ENCODE measurements at regions of chr5 and their contacts with region 1.

Region 1: DNA sequence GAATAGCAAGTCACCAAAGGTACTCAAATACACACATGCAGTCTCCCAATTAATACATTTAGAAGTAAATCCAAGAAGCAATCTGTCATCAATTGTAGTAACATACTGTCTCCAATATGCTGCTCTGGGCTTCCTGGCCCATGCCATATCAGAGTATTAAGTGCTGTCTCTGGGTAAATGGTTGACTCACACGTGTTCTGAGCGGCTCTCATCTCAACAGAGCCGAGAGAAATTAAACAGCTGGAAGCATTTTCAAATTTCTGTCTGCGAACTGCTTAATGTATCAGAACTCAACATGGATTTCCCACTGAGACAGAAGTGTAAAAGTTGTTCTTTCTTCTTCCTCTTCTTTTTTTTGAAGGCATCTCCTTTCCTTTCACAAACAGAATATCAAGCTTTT is 247.3 kb upstream of the TAS2R1 start:
- DNase-seq: no peak
- ATAC-seq: no peak
- H3K4me3 ChIP-seq: no peak overlapping the region
- H3K27ac ChIP-seq: no peak overlapping the region
- H3K4me1 ChIP-seq: no peaks in the 10 kb centered on the region
- H3K27me3 ChIP-seq: no peaks in the 10 kb centered on the region
- CTCF ChIP-seq: no peak

Region 2: GRCh38 chr5:9343146-9343850 is 534.2 kb before region 1 on chr5:
- intact Hi-C with region 1: loop called in 1 of 2 experiments (anchors 5 kb)
- DNase-seq: no peak
- ATAC-seq: no peak
- H3K4me3 ChIP-seq: no peak overlapping the region
- H3K27ac ChIP-seq: no peak overlapping the region
- H3K4me1 ChIP-seq: no peaks in the 10 kb centered on the region
- H3K27me3 ChIP-seq: no peaks in the 10 kb centered on the region
- CTCF ChIP-seq: no peak

Region 3: DNA sequence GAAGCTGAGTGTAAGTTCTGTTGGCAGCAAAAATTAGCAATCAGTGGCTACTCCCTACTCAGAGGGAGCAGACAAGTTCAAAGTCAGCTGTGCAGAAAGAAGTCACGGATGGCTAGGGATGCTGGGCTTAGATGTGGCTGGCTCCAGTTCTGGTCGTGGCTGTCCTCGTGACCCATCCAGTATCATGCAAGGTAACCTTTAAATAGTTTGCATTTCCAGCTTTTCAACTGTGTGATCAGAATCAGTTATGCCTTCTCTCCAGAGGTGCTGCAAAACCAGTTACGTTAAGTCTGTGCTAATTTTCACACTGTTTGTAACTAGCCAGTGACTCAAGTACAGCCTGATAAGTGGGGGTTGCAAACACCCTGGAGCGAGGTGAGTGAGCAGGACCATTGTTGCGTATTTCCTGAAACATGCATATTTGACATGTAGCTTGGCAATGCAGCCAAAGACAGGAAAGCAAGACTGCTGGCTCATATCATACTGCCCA is 69.8 kb after region 1 on chr5:
- intact Hi-C with region 1: no loop called
- DNase-seq: no peak
- ATAC-seq: no peak
- H3K4me3 ChIP-seq: no peak overlapping the region
- H3K27ac ChIP-seq: no peak overlapping the region
- H3K4me1 ChIP-seq: no peaks in the 10 kb centered on the region
- H3K27me3 ChIP-seq: no peaks in the 10 kb centered on the region
- CTCF ChIP-seq: no peak

Measured in psoas muscle (tissue), 8 donors.